B cell (primary cell): ENCODE measurements at regions of chr4 and their contacts with region 1.

Region 1: GRCh38 chr4:102430461-102430910 is 70.7 kb upstream of the NFKB1 start:
- DNase-seq: no peak
- ATAC-seq: no peak
- H3K4me3 ChIP-seq: peak overlapping the region; percentile 48 to 79 (median 61)
- H3K4me3 Mint-ChIP-seq: peak overlapping the region; percentile 91
- H3K27ac ChIP-seq: peak overlapping the region in 1 of 2 donors; percentile 38
- H3K27ac Mint-ChIP-seq: peak overlapping the region; percentile 59
- H3K4me1 ChIP-seq: peaks cover 0 to 5% of the 10 kb centered on the region in 2 donors
- H3K4me1 Mint-ChIP-seq: peaks cover 5% of the 10 kb centered on the region
- H3K27me3 ChIP-seq: no peaks in the 10 kb centered on the region
- H3K27me3 Mint-ChIP-seq: no peaks in the 10 kb centered on the region
- CTCF ChIP-seq: no peak

Region 2: GRCh38 chr4:102483120-102483519 is 52.6 kb after region 1 on chr4:
- CTCF ChIA-PET with region 1: no interaction called
- POLR2A ChIA-PET with region 1: no interaction called
- intact Hi-C with region 1: no loop called
- DNase-seq: no peak
- ATAC-seq: no peak
- H3K4me3 ChIP-seq: no peak overlapping the region
- H3K4me3 Mint-ChIP-seq: no peak overlapping the region
- H3K27ac ChIP-seq: no peak overlapping the region
- H3K27ac Mint-ChIP-seq: no peak overlapping the region
- H3K4me1 ChIP-seq: no peaks in the 10 kb centered on the region
- H3K4me1 Mint-ChIP-seq: peaks cover 3% of the 10 kb centered on the region
- H3K27me3 ChIP-seq: no peaks in the 10 kb centered on the region
- H3K27me3 Mint-ChIP-seq: no peaks in the 10 kb centered on the region
- CTCF ChIP-seq: no peak

Region 3: GRCh38 chr4:103198111-103198765 is 767.8 kb after region 1 on chr4 and contains the start of gene CENPE:
- CTCF ChIA-PET with region 1: no interaction called
- POLR2A ChIA-PET with region 1: no interaction called
- intact Hi-C with region 1: loop called (anchors 1 kb)
- DNase-seq: peak; percentile 94
- ATAC-seq: peak; percentile 88
- H3K4me3 ChIP-seq: peak within 1 kb of the TSS; percentile 59 to 95 (median 79)
- H3K4me3 Mint-ChIP-seq: peak within 1 kb of the TSS; percentile 94
- H3K27ac ChIP-seq: peak within 1 kb of the TSS; percentile 64 to 87
- H3K27ac Mint-ChIP-seq: peak within 1 kb of the TSS; percentile 96
- H3K4me1 ChIP-seq: peaks cover 9 to 10% of the 10 kb centered on the region in 2 donors
- H3K4me1 Mint-ChIP-seq: peaks cover 15% of the 10 kb centered on the region
- H3K27me3 ChIP-seq: peaks cover 0 to 7% (median 0%) of the 10 kb centered on the region in 4 experiments
- H3K27me3 Mint-ChIP-seq: peaks cover 12% of the 10 kb centered on the region
- CTCF ChIP-seq: no peak
- total RNA-seq, gene CENPE: 2.1 and 2.8 TPM in 2 replicates